ENCODE measurements at regions of chr7 and their contacts with region 1.

Region 1: GRCh38 chr7:77360104-77360503 is 56.0 kb downstream of the GSAP start:
- DNase-seq: no peak
- H3K4me3 ChIP-seq: no peak overlapping the region
- H3K27ac ChIP-seq: no peak overlapping the region
- H3K4me1 ChIP-seq: no peaks in the 10 kb centered on the region
- H3K27me3 ChIP-seq: no peaks in the 10 kb centered on the region
- CTCF ChIP-seq: no peak
- EP300 ChIP-seq: no peak
- POLR2A ChIP-seq: no peak

Region 2: DNA sequence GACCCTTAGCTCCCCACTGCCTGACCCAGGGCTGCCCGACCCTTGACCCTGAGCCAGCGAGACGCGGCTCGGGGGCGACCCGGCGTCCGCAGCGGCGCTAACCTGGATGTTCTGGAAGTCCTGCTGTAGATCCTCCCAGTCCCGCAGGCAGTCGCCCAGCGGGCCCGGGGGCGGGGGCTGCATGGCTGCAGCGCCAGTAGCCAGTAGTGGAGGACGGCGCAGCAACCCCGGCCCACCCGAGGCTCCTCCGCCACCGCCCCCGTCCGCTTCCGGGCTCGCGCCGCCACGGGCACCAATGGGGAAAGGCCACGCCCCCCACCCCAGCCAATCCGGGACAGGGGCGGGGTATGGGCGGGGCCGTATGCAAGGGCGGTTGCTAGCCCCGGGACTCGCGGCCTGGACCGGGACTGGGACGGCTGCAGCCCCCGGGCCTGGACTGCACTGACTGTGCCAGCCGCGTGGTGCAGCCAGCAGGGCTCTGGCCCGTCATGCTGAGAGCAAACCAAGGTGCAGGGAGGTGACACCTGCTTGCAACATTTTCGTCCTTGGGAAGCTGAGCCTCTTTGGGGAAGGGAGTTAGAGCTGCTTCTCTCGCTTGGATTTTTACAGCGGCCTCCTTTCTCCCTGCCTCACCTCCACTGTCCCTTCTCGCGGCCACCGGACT is 1365.6 kb before region 1 on chr7 and contains the start of gene TMEM120A:
- in situ Hi-C with region 1: no loop called
- intact Hi-C with region 1: no loop called
- DNase-seq: peak; percentile 98
- H3K4me3 ChIP-seq: peak within 1 kb of the TSS; percentile 62 to 90 (median 70)
- H3K27ac ChIP-seq: peak within 1 kb of the TSS; percentile 85 to 96 (median 92)
- H3K4me1 ChIP-seq: peaks cover 6 to 29% (median 17%) of the 10 kb centered on the region in 4 donors
- H3K27me3 ChIP-seq: no peaks in the 10 kb centered on the region
- CTCF ChIP-seq: peak; percentile 27 to 43 (median 33)
- EP300 ChIP-seq: no peak
- POLR2A ChIP-seq: peak; percentile 89
- total RNA-seq, gene TMEM120A: 57.6 to 119 (median 92.0) TPM

Region 3: DNA sequence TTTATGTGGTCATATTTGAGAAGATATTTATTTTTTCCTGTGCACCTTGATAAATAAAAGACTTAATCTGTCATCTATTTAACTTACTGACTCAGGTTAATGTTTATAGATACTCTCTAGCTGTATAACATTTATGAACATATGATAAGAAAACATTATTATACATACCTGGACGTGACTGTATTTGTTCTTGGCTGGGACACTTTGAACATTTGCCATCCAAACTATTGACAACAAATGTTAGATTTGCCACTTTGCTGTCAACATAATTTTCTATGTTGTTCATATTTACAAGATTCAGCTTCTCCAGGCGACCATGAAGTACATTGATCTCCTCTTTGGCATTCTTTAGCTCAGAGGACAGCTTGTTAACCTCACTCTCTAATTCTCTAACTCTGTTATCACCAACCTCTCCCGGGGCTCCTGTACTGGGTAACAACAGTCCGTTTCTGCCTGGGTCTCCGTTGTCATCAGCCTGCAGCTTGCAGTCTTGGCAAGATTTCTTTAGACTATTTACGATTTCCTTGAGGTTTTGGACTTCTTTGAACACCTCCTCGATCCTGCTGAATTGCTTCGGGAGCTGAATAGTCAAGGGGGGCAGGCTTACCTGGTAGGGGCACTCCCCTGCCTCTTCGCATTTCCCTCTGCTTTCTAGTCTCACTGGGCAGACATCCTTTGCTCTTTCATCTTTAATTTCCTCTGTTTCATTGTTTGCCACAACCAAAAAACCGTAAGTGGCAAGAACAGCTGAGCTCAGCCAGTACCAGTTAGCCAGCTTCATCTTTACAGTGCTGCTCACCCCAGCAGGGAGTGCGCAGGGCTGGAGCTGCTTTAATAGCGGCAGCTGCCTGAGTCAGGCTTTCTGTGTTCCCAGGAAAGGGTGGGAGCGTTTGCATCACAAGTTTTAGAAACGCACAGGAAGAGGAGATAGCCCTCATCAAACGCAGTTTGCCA is 160.8 kb before region 1 on chr7 and contains the start of gene FGL2:
- in situ Hi-C with region 1: no loop called
- intact Hi-C with region 1: no loop called
- DNase-seq: peak; percentile 75
- H3K4me3 ChIP-seq: peak within 1 kb of the TSS; percentile 24 to 57 (median 37)
- H3K27ac ChIP-seq: peak within 1 kb of the TSS; percentile 74 to 83 (median 74)
- H3K4me1 ChIP-seq: peaks cover 6 to 63% (median 28%) of the 10 kb centered on the region in 4 donors
- H3K27me3 ChIP-seq: no peaks in the 10 kb centered on the region
- CTCF ChIP-seq: no peak
- EP300 ChIP-seq: no peak
- POLR2A ChIP-seq: peak; percentile 56
- total RNA-seq, gene FGL2: 23.1 to 45.2 (median 33.6) TPM

Region 4: DNA sequence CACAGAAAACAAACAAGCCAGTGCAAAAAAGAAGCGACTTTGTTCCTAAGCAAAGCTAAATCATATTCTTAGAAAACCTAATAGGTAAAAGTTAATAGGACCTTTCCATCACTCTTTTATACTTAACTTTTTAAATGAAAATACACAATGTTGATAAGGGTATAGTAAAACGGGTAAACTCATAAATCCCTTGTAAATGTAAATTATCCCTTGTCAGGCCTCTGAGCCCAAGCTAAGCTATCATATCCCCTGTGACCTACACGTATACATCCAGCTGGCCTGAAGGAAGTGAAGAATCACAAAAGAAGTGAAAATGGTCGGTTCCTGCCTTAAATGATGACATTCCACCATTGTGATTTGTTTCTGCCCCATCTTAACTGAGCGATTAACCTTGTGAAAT is 20.4 kb before region 1 on chr7:
- in situ Hi-C with region 1: no loop called
- intact Hi-C with region 1: loop called (anchors 1 kb)
- DNase-seq: no peak
- H3K4me3 ChIP-seq: no peak overlapping the region
- H3K27ac ChIP-seq: no peak overlapping the region
- H3K4me1 ChIP-seq: peaks cover 0 to 34% (median 11%) of the 10 kb centered on the region in 4 donors
- H3K27me3 ChIP-seq: no peaks in the 10 kb centered on the region
- CTCF ChIP-seq: no peak
- EP300 ChIP-seq: no peak
- POLR2A ChIP-seq: no peak